CD4-positive, alpha-beta memory T cell (primary cell): ENCODE measurements at regions of chr12 and their contacts with region 1.

Region 1: GRCh38 chr12:92078167-92079053 is 67.2 kb downstream of the BTG1 start:
- DNase-seq: no peak
- H3K4me3 ChIP-seq: no peak overlapping the region
- H3K4me3 Mint-ChIP-seq: peak overlapping the region in 2 of 8 donors; percentile 7 to 20
- H3K27ac ChIP-seq: no peak overlapping the region
- H3K27ac Mint-ChIP-seq: peak overlapping the region in 4 of 7 donors; percentile 7 to 69 (median 56)
- H3K4me1 ChIP-seq: peaks cover 32% of the 10 kb centered on the region
- H3K4me1 Mint-ChIP-seq: peaks cover 36 to 73% (median 56%) of the 10 kb centered on the region in 4 donors
- H3K27me3 ChIP-seq: no peaks in the 10 kb centered on the region
- H3K27me3 Mint-ChIP-seq: no peaks in the 10 kb centered on the region

Region 2: GRCh38 chr12:91804533-91804932 is 273.9 kb before region 1 on chr12:
- CTCF ChIA-PET with region 1: no interaction called
- POLR2A ChIA-PET with region 1: no interaction called
- intact Hi-C with region 1: no loop called
- DNase-seq: no peak
- H3K4me3 ChIP-seq: no peak overlapping the region
- H3K4me3 Mint-ChIP-seq: no peak overlapping the region
- H3K27ac ChIP-seq: no peak overlapping the region
- H3K27ac Mint-ChIP-seq: no peak overlapping the region
- H3K4me1 ChIP-seq: no peaks in the 10 kb centered on the region
- H3K4me1 Mint-ChIP-seq: peaks cover 0 to 5% (median 0%) of the 10 kb centered on the region in 4 donors
- H3K27me3 ChIP-seq: no peaks in the 10 kb centered on the region
- H3K27me3 Mint-ChIP-seq: no peaks in the 10 kb centered on the region

Region 3: DNA sequence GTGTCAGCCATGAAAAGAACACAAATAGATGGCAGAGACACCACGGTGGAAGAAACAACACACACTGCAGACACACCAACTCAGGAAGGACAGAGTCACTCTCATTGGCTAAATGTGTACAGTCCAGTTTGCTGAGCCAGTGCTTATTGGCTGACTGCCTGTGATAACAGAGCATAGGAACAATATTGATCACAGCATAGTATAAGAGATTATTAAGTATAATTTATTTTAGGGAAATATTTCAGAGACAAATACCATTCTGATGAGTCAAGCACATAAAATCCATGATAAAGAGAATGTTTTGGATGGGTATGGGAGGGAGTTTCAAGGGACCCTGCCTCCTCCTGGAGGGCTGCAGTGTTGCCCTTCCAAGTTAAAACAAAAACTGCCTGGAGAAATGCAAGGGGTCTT is 16.3 kb after region 1 on chr12:
- CTCF ChIA-PET with region 1: no interaction called
- POLR2A ChIA-PET with region 1: no interaction called
- intact Hi-C with region 1: loop called (anchors 2 kb)
- DNase-seq: no peak
- H3K4me3 ChIP-seq: no peak overlapping the region
- H3K4me3 Mint-ChIP-seq: peak overlapping the region in 1 of 8 donors; percentile 10
- H3K27ac ChIP-seq: no peak overlapping the region
- H3K27ac Mint-ChIP-seq: peak overlapping the region in 2 of 7 donors; percentile 17 to 20
- H3K4me1 ChIP-seq: peaks cover 21% of the 10 kb centered on the region
- H3K4me1 Mint-ChIP-seq: peaks cover 17 to 35% (median 27%) of the 10 kb centered on the region in 4 donors
- H3K27me3 ChIP-seq: no peaks in the 10 kb centered on the region
- H3K27me3 Mint-ChIP-seq: no peaks in the 10 kb centered on the region